ENCODE measurements at regions of chr12 and their contacts with region 1.

Region 1: DNA sequence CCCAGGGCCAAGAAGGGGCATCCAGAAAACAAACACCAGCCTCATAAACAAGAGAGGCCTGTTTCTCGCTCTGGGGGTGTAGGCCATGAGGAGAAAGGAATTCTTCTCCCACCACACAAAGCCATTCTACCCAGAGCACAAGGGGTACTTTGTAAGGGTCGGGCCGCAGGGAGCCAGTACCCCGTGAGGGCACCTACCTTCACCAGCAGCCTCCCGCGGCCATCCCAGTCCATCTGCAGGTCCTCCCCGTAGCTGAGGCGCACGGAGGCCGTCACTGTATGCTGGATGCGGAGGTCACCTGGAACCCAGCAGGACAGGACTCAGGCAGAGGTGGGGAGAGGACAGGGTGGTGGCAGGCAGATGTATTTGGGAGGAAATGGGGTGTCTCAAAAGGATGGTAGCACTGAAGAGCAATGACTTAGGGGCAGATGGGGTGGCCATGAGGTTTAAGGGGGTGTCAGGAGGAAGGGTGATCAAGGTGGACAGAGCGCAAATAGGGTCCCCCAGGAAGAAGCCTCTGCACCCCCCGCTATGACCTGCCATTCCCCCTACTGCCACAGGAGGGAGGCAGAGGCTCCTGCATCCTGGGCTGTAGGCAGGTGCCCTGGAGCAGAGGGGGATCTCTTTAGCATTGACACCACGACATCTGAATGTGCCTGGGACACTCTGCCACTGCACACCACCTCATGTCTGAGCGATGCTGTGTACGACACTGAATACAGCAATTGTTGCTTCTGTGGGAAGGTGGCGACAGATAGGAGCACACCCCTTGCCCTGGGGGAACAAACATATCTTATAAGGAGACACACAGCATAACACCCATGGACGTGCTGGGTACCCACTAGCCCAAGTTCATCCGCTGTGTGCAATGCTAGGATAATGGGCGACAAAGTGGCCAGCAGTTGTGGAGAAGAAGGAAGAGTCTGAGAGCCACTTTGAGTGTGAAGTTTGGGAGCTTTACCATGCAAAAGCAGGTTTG is 61.4 kb downstream of the VWF start:
- DNase-seq: peak; percentile 50
- ATAC-seq: peak; percentile 78
- H3K4me3 ChIP-seq: no peak overlapping the region
- H3K27ac ChIP-seq: no peak overlapping the region
- H3K4me1 ChIP-seq: no peaks in the 10 kb centered on the region
- H3K27me3 ChIP-seq: no peaks in the 10 kb centered on the region
- CTCF ChIP-seq: peak; percentile 90

Region 2: GRCh38 chr12:6154730-6155459 is 91.8 kb after region 1 on chr12:
- CTCF ChIA-PET with region 1: interaction called, 11 read pairs
- POLR2A ChIA-PET with region 1: no interaction called
- in situ Hi-C with region 1: no loop called
- intact Hi-C with region 1: no loop called
- DNase-seq: no peak
- ATAC-seq: no peak
- H3K4me3 ChIP-seq: no peak overlapping the region
- H3K27ac ChIP-seq: no peak overlapping the region
- H3K4me1 ChIP-seq: no peaks in the 10 kb centered on the region
- H3K27me3 ChIP-seq: no peaks in the 10 kb centered on the region
- CTCF ChIP-seq: no peak

Region 3: DNA sequence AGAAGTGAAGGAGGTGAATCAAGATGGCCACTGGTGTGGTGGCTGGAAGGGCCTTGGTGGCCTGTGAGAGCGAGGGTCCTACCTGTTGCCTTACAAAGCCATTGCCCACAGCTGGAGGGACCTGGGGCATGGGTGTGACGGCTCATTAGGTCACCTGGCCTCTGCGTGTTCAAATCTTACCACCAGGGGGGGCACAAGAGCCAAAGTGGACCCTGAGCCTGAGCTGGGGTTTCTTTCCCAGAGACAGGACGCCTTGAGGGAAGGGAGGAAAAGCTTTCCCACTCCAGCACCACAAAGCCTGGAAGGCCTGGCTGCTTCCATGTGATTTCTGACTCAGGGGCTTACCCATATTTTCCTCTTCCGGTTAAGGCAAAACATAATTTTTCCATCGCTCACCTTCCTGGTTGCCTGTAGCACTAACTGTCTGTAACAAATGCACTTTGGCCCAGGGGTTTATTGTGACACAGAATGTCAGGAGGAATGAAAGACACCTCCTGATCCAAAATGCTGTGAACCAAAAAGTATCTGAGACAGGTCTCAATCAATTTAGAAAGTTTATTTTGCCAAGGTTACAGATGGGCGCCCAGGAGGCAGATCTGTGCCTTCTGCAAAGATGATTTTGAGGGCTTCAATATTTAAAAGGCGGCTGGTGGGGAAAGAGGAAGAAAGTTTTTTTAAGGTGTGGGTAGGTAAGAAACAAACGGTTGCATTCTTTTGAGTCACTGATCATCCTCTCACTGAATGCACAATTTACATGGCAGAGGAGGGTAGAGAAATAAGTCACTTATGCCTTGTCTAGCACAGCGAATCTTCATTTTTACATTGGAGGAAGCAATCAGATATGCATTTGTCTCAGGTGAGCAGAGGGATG is 132.9 kb after region 1 on chr12:
- CTCF ChIA-PET with region 1: no interaction called
- POLR2A ChIA-PET with region 1: no interaction called
- in situ Hi-C with region 1: no loop called
- intact Hi-C with region 1: loop called (anchors 2 kb)
- DNase-seq: peak; percentile 87
- ATAC-seq: peak; percentile 85
- H3K4me3 ChIP-seq: no peak overlapping the region
- H3K27ac ChIP-seq: peak overlapping the region; percentile 61
- H3K4me1 ChIP-seq: peaks cover 7% of the 10 kb centered on the region
- H3K27me3 ChIP-seq: no peaks in the 10 kb centered on the region
- CTCF ChIP-seq: peak; percentile 88

Region 4: GRCh38 chr12:6230321-6231110 is 167.5 kb after region 1 on chr12:
- CTCF ChIA-PET with region 1: no interaction called
- POLR2A ChIA-PET with region 1: interaction called, 16 read pairs
- in situ Hi-C with region 1: no loop called
- intact Hi-C with region 1: no loop called
- DNase-seq: no peak
- ATAC-seq: no peak
- H3K4me3 ChIP-seq: no peak overlapping the region
- H3K27ac ChIP-seq: no peak overlapping the region
- H3K4me1 ChIP-seq: no peaks in the 10 kb centered on the region
- H3K27me3 ChIP-seq: no peaks in the 10 kb centered on the region
- CTCF ChIP-seq: no peak

Region 5: DNA sequence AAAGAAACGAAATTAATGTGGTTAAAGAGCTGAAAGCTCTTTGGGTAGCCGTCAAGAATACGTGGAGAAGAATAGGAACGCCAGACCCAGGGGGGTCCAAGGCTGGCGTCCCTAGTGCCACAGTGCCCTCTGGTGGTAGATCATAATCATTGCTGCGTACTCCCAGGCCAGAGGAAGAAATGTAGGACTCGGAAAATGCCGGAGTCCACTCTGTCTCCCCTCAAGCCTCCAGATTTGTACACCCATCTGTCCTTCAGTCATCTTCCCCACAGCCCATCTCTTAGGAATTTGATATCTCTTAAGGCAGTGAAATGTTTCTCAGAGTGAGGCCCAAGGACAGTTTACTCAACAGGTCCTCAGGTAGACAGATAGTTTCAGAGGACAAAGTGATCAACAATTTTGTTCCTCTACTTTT is 222.0 kb after region 1 on chr12:
- CTCF ChIA-PET with region 1: interaction called, 7 read pairs
- POLR2A ChIA-PET with region 1: no interaction called
- in situ Hi-C with region 1: no loop called
- intact Hi-C with region 1: loop called (anchors 2 kb)
- DNase-seq: no peak
- ATAC-seq: peak; percentile 79
- H3K4me3 ChIP-seq: no peak overlapping the region
- H3K27ac ChIP-seq: peak overlapping the region; percentile 63; the same call in 1 of the 2 replicates
- H3K4me1 ChIP-seq: peaks cover 11% of the 10 kb centered on the region
- H3K27me3 ChIP-seq: no peaks in the 10 kb centered on the region
- CTCF ChIP-seq: peak; percentile 87

Measured in Panc1 (cell line).